Heart right ventricle (tissue), 16 donors: ENCODE measurements at regions of chr22 and their contacts with region 1.

Region 1: DNA sequence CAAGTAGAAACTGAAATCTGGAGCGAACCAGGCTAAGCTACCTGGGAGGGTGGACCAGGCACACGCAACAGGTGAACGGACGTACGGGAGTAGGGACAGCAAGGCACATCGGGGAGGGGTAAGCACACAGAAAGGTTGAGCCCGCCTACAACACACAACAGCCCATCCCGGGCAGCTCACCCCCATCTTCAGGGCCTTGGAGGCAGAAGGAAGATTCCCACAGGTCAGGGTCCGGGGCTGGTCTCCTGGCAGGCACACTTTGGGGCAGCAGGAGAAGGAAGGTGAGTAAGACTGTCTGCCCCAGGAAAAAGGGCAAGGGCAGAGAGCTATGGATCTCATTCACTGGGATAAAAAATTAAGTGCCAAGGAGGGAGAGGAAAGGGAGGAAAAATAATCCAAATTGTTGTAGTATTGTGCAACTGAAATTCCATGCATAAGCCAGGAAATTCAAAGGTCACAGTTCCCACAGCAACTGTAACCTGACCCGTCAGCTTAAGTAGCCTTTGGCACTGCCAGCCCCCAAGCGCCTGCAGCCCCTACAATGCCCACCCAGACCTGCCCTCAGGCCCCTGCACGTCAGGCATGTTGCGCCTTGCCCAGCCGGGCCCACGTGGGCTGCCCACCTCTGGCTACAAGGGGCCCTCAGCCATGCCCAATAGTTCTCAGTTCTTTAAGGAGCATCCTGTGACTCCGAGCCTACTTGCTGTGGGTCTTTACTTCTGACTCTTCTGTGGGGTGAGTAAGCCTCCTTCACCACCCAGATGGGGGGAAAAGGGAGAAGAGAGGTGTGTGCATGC is 51.8 kb downstream of the MICAL3 start:
- DNase-seq: peak in 1 of 2 donors; percentile 29
- ATAC-seq: peak in 7 of 8 donors; percentile 26 to 67 (median 45)
- H3K4me3 ChIP-seq: no peak overlapping the region
- H3K27ac ChIP-seq: peak overlapping the region in 8 of 10 donors; percentile 12 to 73 (median 47)
- H3K4me1 ChIP-seq: peaks cover 10 to 78% (median 52%) of the 10 kb centered on the region in 9 donors
- H3K27me3 ChIP-seq: no peaks in the 10 kb centered on the region
- CTCF ChIP-seq: no peak

Region 2: GRCh38 chr22:17903564-17904295 is 68.9 kb before region 1 on chr22:
- intact Hi-C with region 1: loop called in 1 of 10 experiments (anchors 10 kb)
- DNase-seq: peak in 1 of 2 donors; percentile 28
- ATAC-seq: peak in 7 of 8 donors; percentile 25 to 77 (median 55)
- H3K4me3 ChIP-seq: no peak overlapping the region
- H3K27ac ChIP-seq: peak overlapping the region in 9 of 10 donors; percentile 22 to 72 (median 50)
- H3K4me1 ChIP-seq: peaks cover 11 to 69% (median 37%) of the 10 kb centered on the region in 9 donors
- H3K27me3 ChIP-seq: no peaks in the 10 kb centered on the region
- CTCF ChIP-seq: peak in 1 of 9 donors; percentile 26

Region 3: GRCh38 chr22:18031695-18032454 is 59.3 kb after region 1 on chr22:
- intact Hi-C with region 1: loop called in 1 of 10 experiments (anchors 10 kb)
- DNase-seq: no peak
- ATAC-seq: peak in 7 of 8 donors; percentile 16 to 77 (median 48)
- H3K4me3 ChIP-seq: no peak overlapping the region
- H3K27ac ChIP-seq: peak overlapping the region in 4 of 10 donors; percentile 32 to 71 (median 52)
- H3K4me1 ChIP-seq: peaks cover 0 to 44% (median 20%) of the 10 kb centered on the region in 9 donors
- H3K27me3 ChIP-seq: peaks cover 0 to 16% (median 0%) of the 10 kb centered on the region in 7 donors
- CTCF ChIP-seq: no peak